ENCODE measurements at regions of chr12 and their contacts with region 1.

Region 1: DNA sequence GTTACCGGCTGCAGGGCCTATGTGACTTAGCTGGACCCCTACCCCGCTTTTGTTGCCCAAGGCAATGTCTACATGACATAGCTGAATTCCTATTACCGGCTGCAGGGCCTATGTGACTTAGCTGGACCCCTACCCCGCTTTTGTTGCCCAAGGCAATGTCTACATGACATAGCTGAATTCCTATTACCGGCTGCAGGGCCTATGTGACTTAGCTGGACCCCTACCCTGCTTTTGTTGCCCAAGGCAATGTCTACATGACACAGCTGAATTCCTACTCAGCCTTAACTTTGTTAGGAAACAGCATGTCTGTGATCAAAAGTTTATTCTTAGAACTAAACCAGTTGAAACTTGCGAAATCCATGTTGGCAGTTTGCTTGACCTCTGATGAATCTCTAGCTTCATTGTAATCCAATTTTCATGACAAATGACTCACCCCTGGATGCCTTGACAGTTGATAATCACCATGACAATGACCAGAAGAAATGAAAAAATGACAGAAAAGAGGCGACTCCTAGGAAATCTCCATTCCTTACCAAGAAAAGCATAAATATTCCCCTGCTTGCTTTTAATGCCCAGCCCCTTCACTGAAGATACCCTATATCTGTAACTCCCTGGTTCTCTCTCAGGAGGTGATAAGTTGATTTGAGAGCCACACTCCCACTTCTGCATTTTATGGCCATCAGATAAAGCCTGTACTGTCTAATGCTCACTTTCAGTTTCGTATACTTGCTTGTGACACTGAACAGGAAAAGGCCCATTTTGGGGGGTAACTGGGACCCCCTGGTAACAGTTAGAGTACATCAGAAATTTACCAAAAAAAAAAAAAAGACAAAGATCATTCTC is 148.5 kb upstream of the SYT10 start:
- DNase-seq: peak; percentile 64 to 93 (median 76)
- ATAC-seq: peak; percentile 93
- H3K4me3 ChIP-seq: peak overlapping the region; percentile 4; the same call in 1 of the 2 replicates
- H3K27ac ChIP-seq: peak overlapping the region; percentile 91
- H3K4me1 ChIP-seq: peaks cover 7 to 47% of the 10 kb centered on the region in 2 experiments; a peak in 4 of 5 replicates
- H3K27me3 ChIP-seq: no peaks in the 10 kb centered on the region
- CTCF ChIP-seq: no peak
- EP300 ChIP-seq: peak; percentile 97; the same call in 1 of the 2 replicates
- POLR2A ChIP-seq: no peak
- RAD21 ChIP-seq: peak in 1 of 2 experiments; percentile 32; a peak in 2 of 4 replicates

Region 2: DNA sequence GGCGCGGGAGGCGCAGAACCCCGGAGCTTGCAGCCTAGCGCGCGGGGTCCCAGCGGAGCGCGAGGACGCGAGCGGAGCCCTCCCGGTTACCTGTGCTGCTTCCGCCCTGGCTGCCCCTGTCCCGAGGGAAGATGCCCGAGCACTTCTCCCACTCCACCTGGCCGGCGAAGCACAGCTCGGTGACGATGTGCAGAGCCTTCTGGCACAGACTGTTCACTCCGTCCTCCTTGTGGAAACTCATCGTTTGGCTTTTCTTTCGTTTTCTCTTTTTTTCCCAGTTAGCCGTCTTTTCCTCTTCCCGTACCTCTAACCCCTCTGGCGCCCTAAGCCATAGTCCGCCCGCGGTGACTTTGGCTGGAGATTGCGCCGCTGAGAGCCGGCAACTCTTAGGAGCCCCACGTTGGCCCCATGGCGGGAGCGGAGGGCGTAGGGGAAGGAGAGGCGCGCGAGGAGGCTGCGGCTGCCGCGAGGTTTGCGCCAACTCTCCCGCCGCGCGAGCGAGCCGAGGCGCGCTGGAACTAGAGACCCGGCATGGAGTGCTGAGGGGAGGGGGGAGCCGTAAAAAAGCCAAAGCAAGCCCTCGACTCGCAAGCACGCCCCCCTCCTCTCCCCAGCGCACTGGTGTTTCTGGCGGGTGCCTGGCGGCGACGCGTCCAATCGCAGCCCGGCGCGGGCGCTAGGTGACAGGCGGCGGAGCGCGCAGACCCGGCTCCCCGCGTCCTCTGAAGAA is 148.6 kb before region 1 on chr12 and contains the start of gene SYT10:
- CTCF ChIA-PET with region 1: no interaction called
- POLR2A ChIA-PET with region 1: no interaction called
- in situ Hi-C with region 1: no loop called
- intact Hi-C with region 1: loop called (anchors 5 kb)
- DNase-seq: peak; percentile 53 to 82 (median 69)
- ATAC-seq: peak; percentile 83
- H3K4me3 ChIP-seq: peak within 1 kb of the TSS; percentile 54
- H3K27ac ChIP-seq: peak within 1 kb of the TSS; percentile 75
- H3K4me1 ChIP-seq: peaks cover 0 to 15% of the 10 kb centered on the region in 2 experiments; a peak in 3 of 5 replicates
- H3K27me3 ChIP-seq: no peaks in the 10 kb centered on the region
- CTCF ChIP-seq: no peak
- EP300 ChIP-seq: no peak
- POLR2A ChIP-seq: peak; percentile 63
- RAD21 ChIP-seq: no peak
- polyA plus RNA-seq, gene SYT10: 0.27 TPM

Region 3: GRCh38 chr12:33514893-33515292 is 73.2 kb before region 1 on chr12:
- CTCF ChIA-PET with region 1: no interaction called
- POLR2A ChIA-PET with region 1: no interaction called
- in situ Hi-C with region 1: no loop called
- intact Hi-C with region 1: loop called (anchors 2 kb)
- DNase-seq: no peak
- ATAC-seq: no peak
- H3K4me3 ChIP-seq: no peak overlapping the region
- H3K27ac ChIP-seq: no peak overlapping the region
- H3K4me1 ChIP-seq: no peaks in the 10 kb centered on the region
- H3K27me3 ChIP-seq: no peaks in the 10 kb centered on the region
- CTCF ChIP-seq: peak in 1 of 3 experiments; percentile 1; a peak in 1 of 6 replicates
- EP300 ChIP-seq: no peak
- POLR2A ChIP-seq: no peak
- RAD21 ChIP-seq: no peak; a peak in 1 of 4 replicates

Measured in K562 (cell line).